Activated CD4-positive, alpha-beta memory T cell treated with anti-CD3 and anti-CD28 coated beads for 36 hours (primary cell): ENCODE measurements at regions of chr5 and their contacts with region 1.

Region 1: DNA sequence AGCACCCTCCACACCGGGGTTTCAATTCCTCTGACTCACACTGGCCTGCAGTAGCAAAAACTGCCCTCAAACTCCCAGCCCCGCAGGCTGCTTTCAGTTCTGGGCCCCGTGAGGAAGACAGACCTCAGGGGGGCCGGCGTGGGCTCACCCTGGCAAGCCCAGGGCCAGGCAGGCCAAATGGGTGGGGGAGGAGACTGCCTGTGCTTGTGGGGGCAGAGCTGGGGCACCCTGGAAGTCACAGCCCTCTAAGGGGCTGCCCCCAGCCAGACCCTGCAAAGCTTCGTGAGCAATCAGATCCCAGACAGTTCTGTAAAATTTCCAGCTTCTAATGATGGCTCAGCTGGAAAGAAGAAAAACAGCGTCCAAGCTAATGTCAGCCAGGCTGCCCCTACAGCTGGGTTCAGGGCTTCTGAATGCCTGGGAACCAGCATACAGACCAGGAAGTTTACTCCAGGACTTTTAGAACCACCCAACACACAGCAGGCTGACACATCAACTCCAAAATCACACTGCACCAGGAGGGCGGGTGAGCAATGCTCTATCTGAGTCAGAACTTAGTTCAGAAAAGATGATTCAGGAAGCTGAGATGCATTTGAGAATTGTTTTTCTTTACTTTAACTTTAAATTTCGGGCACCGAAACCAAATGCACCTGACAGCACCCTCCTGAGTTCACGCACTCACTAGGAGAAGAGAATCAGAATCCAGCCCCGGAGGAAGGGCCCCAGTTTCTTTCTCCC is 34.6 kb downstream of the LPCAT1 start:
- DNase-seq: peak; percentile 80
- H3K4me3 Mint-ChIP-seq: no peak overlapping the region
- H3K27ac Mint-ChIP-seq: peak overlapping the region; percentile 80
- H3K4me1 Mint-ChIP-seq: peaks cover 32% of the 10 kb centered on the region
- H3K27me3 Mint-ChIP-seq: no peaks in the 10 kb centered on the region

Region 2: DNA sequence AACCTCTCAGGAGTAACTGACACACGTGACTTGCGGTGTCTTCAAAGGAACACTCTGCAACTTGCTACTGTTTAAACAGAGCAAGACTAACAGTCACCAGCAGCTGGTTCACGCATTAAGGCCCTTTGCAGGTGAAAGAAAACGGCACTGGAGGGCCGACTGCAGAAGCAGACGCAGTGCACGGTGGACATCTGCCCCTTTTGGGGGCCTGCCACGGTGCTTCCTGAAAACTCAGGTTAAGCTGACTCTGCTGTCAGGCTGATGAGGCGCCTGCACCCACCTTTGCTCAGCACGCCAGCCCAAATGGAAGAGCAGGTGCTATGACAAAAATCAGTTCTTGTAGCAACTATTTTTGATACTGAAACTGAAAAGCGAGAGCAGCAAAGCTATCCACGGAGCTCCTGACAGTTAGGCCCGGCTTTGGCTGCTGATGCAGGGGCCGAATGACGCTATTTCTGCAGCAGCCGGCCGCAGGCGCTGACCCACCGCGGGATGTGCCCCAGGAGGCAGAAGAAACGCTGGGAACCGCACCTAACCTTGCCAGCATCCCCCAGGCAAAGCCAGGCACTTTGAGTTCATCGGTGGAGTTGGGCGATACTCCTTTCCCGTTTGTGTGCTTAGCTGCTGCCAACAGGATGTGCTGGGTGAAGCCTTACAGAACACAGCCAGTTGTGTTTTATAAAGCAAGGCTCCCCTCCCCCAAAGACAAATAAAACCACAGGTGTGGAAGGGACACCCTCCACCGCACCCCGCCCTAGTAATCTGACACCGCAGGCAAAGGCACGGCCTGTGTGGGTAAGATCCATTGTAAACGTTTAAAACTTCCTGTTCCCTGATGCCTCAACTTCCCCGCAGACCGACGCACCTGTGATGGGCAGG is 173.2 kb before region 1 on chr5:
- CTCF ChIA-PET with region 1: no interaction called
- POLR2A ChIA-PET with region 1: no interaction called
- intact Hi-C with region 1: loop called (anchors 5 kb)
- DNase-seq: peak; percentile 70
- H3K4me3 Mint-ChIP-seq: peak overlapping the region; percentile 53
- H3K27ac Mint-ChIP-seq: peak overlapping the region; percentile 89
- H3K4me1 Mint-ChIP-seq: peaks cover 57% of the 10 kb centered on the region
- H3K27me3 Mint-ChIP-seq: no peaks in the 10 kb centered on the region

Region 3: DNA sequence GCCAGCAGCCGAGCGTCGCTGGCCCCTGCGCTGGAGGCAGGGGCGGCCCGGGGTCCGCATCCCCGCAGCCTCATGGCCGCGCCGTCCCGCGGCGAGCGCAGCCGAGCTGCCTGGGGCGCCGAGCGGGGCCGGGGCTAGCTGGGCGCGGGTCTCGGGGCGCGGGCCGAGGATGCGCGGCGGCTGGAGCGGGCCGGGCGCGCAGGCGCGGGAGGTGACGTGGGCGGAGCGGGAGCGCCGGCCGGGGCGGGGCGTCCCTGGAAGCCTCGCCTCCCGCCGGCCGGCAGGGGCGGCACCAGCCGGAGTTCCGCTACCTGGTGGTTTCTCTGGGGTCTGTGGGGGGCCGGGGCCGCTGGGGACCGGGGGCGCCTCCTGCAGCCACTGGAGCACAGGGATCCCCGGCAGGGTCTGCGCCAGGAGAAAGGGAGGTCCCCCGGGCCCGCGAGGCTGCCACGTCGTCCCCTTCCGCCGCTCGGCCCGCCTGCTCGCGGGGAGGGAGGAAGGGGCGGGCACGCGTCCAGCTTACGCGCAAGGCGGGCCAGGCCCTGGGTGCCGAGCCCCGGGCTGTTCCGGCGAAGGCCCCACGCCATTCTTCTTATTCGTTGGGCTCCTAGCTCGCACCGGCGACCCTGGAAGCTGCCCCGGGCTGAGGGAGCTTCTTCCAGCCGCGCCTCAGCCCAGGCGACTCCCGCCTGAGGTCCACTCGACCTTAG is 34.8 kb after region 1 on chr5 and contains the start of gene LPCAT1:
- CTCF ChIA-PET with region 1: no interaction called
- POLR2A ChIA-PET with region 1: no interaction called
- intact Hi-C with region 1: loop called (anchors 2 kb)
- DNase-seq: peak; percentile 81
- H3K4me3 Mint-ChIP-seq: peak within 1 kb of the TSS; percentile 86
- H3K27ac Mint-ChIP-seq: peak within 1 kb of the TSS; percentile 66
- H3K4me1 Mint-ChIP-seq: peaks cover 33% of the 10 kb centered on the region
- H3K27me3 Mint-ChIP-seq: no peaks in the 10 kb centered on the region
- total RNA-seq, gene LPCAT1: 48.4 to 51.4 TPM